BJ (cell line): ENCODE measurements at regions of chr6 and their contacts with region 1.

Region 1: DNA sequence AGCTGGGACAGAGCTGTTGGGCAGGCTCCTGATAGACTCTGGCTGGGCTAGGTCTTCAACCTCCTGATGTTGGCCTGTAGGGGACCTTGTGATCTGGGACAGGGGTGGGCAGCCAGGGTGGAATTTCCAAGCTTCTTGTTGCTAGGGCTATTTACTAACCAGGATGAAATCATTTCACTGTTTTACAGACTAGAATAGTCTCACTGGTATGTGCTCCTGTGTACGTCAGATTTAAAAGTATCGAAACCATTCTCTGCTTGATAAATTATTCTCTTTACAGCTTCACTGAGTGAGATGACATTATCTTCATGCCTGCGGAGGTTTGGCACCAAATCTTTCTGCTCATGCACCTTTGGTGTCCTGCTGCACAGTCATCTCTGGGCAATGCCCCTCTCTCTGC is 10.8 kb downstream of the EDN1 start:
- DNase-seq: no peak
- H3K4me3 ChIP-seq: no peak overlapping the region
- H3K27me3 ChIP-seq: no peaks in the 10 kb centered on the region
- CTCF ChIP-seq: no peak

Region 2: GRCh38 chr6:12311106-12311505 is 10.1 kb after region 1 on chr6:
- CTCF ChIA-PET with region 1: interaction called, 18 read pairs
- POLR2A ChIA-PET with region 1: no interaction called
- DNase-seq: no peak
- H3K4me3 ChIP-seq: no peak overlapping the region
- H3K27me3 ChIP-seq: no peaks in the 10 kb centered on the region
- CTCF ChIP-seq: no peak